Dorsolateral prefrontal cortex (tissue), 120 donors: ENCODE measurements at regions of chr4 and their contacts with region 1.

Region 1: DNA sequence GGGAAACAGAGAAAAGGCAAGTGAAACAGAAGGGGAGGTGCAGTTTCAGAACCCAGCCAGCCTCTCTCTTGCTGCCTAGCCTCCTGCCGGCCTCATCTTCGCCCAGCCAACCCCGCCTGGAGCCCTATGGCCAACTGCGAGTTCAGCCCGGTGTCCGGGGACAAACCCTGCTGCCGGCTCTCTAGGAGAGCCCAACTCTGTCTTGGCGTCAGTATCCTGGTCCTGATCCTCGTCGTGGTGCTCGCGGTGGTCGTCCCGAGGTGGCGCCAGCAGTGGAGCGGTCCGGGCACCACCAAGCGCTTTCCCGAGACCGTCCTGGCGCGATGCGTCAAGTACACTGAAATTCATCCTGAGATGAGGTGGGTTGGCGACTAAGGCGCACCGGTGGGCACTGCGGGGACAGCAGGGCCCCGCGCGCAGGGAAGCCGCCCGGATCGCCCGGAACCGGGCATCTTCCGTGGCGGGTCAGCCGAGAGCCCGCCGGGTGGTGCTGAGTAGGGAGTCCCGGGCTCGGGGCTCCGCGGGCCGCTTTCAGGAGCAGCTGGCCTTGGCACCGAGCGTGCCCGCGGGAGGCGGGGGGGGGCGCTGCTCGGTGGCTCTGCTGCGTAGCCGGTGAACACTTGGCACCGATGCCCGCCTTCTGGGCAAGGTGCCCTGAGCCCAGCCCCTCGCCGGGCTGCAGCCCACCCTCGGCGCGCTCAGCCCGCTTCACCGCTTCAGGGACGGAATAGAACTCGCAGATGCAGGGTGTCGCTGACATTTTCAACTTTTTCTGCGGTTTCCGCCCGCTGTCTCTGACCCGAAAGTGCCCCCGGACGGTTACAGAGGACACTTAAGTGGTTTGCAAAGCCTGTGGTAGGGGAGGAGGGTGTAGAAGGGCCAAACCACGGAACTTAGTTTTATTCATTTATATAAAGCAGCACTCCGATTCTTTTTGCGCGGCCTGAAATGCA is at the start of gene CD38:
- DNase-seq: peak in 6 of 10 donors; percentile 14 to 63 (median 38)
- H3K4me3 ChIP-seq: peak within 1 kb of the TSS; percentile 45 to 80 (median 64)
- H3K27ac ChIP-seq: peak within 1 kb of the TSS in 38 of 59 donors; percentile 9 to 78 (median 54)
- H3K27me3 ChIP-seq: peaks cover 0 to 21% (median 0%) of the 10 kb centered on the region in 45 donors
- CTCF ChIP-seq: peak in 2 of 56 donors; percentile 8 to 16
- total RNA-seq, gene CD38: 1.1 to 23.5 (median 7.0) TPM

Region 2: GRCh38 chr4:15738877-15739276 is 39.7 kb before region 1 on chr4:
- intact Hi-C with region 1: loop called in 1 of 2 experiments (anchors 5 kb)
- DNase-seq: no peak
- H3K4me3 ChIP-seq: no peak overlapping the region
- H3K27ac ChIP-seq: peak overlapping the region in 2 of 59 donors; percentile 24 to 34
- H3K27me3 ChIP-seq: peaks cover 0 to 5% (median 0%) of the 10 kb centered on the region in 45 donors
- CTCF ChIP-seq: no peak

Region 3: GRCh38 chr4:15836362-15836761 is 57.8 kb after region 1 on chr4:
- intact Hi-C with region 1: no loop called
- DNase-seq: no peak
- H3K4me3 ChIP-seq: no peak overlapping the region
- H3K27ac ChIP-seq: no peak overlapping the region
- H3K27me3 ChIP-seq: no peaks in the 10 kb centered on the region
- CTCF ChIP-seq: no peak